ENCODE measurements at regions of chr17 and their contacts with region 1.

Region 1: GRCh38 chr17:70848785-70849184 is 679.5 kb downstream of the KCNJ2 start:
- DNase-seq: no peak
- H3K4me3 Mint-ChIP-seq: no peak overlapping the region
- H3K27ac Mint-ChIP-seq: no peak overlapping the region
- H3K4me1 Mint-ChIP-seq: no peaks in the 10 kb centered on the region
- H3K27me3 Mint-ChIP-seq: no peaks in the 10 kb centered on the region

Region 2: GRCh38 chr17:70661342-70662222 is 187.2 kb before region 1 on chr17:
- intact Hi-C with region 1: no loop called
- DNase-seq: no peak
- H3K4me3 Mint-ChIP-seq: no peak overlapping the region
- H3K27ac Mint-ChIP-seq: no peak overlapping the region
- H3K4me1 Mint-ChIP-seq: no peaks in the 10 kb centered on the region
- H3K27me3 Mint-ChIP-seq: no peaks in the 10 kb centered on the region

Region 3: GRCh38 chr17:70834039-70834438 is 14.7 kb before region 1 on chr17:
- intact Hi-C with region 1: loop called (anchors 1 kb)
- DNase-seq: no peak
- H3K4me3 Mint-ChIP-seq: no peak overlapping the region
- H3K27ac Mint-ChIP-seq: no peak overlapping the region
- H3K4me1 Mint-ChIP-seq: no peaks in the 10 kb centered on the region
- H3K27me3 Mint-ChIP-seq: no peaks in the 10 kb centered on the region